ENCODE measurements at regions of chr3 and their contacts with region 1.

Region 1: GRCh38 chr3:4978204-4978965 is 852 bp upstream of the BHLHE40 start:
- DNase-seq: peak; percentile 97
- ATAC-seq: peak; percentile 79
- H3K4me3 ChIP-seq: peak overlapping the region; percentile 55
- H3K27ac ChIP-seq: peak overlapping the region; percentile 84
- H3K4me1 ChIP-seq: peaks cover 11% of the 10 kb centered on the region
- H3K27me3 ChIP-seq: no peaks in the 10 kb centered on the region
- CTCF ChIP-seq: 0 out of 2 replicates have a peak, but pooled peaks have one; percentile 1
- POLR2A ChIP-seq: peak; percentile 22
- RAD21 ChIP-seq: peak; percentile 23; the same call in 1 of the 2 replicates

Region 2: GRCh38 chr3:4712143-4712542 is 266.2 kb before region 1 on chr3:
- CTCF ChIA-PET with region 1: interaction called, 15 read pairs
- POLR2A ChIA-PET with region 1: interaction called, 7 read pairs
- dilution Hi-C with region 1: no loop called
- in situ Hi-C with region 1: loop called (anchors 5 kb)
- intact Hi-C with region 1: loop called (anchors 1 kb)
- DNase-seq: peak; percentile 57
- ATAC-seq: no peak
- H3K4me3 ChIP-seq: no peak overlapping the region
- H3K27ac ChIP-seq: no peak overlapping the region
- H3K4me1 ChIP-seq: peaks cover 5% of the 10 kb centered on the region; the same call in 1 of the 2 replicates
- H3K27me3 ChIP-seq: no peaks in the 10 kb centered on the region
- CTCF ChIP-seq: no peak
- POLR2A ChIP-seq: no peak
- RAD21 ChIP-seq: no peak

Region 3: DNA sequence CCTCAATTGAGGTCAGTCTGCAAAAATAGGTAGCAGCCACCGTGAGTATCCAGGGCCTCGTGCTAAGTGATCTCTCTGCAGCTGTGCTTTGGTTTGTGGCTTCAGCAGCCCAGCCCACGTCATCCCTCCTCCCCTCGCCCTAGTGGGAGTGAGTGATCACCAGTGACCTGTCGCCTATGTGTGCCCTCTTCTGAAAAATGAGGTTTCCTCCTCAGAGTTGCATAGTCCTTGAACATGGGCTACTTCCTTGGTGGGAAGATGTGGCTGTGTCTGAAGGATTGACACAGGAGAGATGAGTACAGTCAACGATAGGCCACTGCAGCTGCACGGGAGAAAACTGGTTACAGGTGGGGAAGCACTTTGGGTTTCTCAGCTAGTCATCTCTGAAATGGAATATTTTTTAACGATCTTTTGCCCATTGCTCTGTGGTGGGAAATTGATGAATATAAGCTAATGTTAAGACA is 143.9 kb before region 1 on chr3:
- CTCF ChIA-PET with region 1: no interaction called
- POLR2A ChIA-PET with region 1: no interaction called
- dilution Hi-C with region 1: no loop called
- in situ Hi-C with region 1: loop called (anchors 10 kb)
- intact Hi-C with region 1: no loop called
- DNase-seq: peak; percentile 17
- ATAC-seq: no peak
- H3K4me3 ChIP-seq: no peak overlapping the region
- H3K27ac ChIP-seq: no peak overlapping the region
- H3K4me1 ChIP-seq: peaks cover 6% of the 10 kb centered on the region
- H3K27me3 ChIP-seq: no peaks in the 10 kb centered on the region
- CTCF ChIP-seq: no peak
- POLR2A ChIP-seq: no peak
- RAD21 ChIP-seq: no peak

Region 4: GRCh38 chr3:4898454-4899313 is 79.7 kb before region 1 on chr3:
- CTCF ChIA-PET with region 1: interaction called, 14 read pairs
- POLR2A ChIA-PET with region 1: no interaction called
- dilution Hi-C with region 1: no loop called
- in situ Hi-C with region 1: no loop called
- intact Hi-C with region 1: no loop called
- DNase-seq: peak; percentile 9
- ATAC-seq: no peak; the same call in 1 of the 2 replicates
- H3K4me3 ChIP-seq: no peak overlapping the region
- H3K27ac ChIP-seq: no peak overlapping the region
- H3K4me1 ChIP-seq: 0 out of 2 replicates have a peak, but pooled peaks cover 3% of the 10 kb centered on the region
- H3K27me3 ChIP-seq: peaks cover 4% of the 10 kb centered on the region; the same call in 1 of the 2 replicates
- CTCF ChIP-seq: no peak
- POLR2A ChIP-seq: no peak
- RAD21 ChIP-seq: no peak

Region 5: DNA sequence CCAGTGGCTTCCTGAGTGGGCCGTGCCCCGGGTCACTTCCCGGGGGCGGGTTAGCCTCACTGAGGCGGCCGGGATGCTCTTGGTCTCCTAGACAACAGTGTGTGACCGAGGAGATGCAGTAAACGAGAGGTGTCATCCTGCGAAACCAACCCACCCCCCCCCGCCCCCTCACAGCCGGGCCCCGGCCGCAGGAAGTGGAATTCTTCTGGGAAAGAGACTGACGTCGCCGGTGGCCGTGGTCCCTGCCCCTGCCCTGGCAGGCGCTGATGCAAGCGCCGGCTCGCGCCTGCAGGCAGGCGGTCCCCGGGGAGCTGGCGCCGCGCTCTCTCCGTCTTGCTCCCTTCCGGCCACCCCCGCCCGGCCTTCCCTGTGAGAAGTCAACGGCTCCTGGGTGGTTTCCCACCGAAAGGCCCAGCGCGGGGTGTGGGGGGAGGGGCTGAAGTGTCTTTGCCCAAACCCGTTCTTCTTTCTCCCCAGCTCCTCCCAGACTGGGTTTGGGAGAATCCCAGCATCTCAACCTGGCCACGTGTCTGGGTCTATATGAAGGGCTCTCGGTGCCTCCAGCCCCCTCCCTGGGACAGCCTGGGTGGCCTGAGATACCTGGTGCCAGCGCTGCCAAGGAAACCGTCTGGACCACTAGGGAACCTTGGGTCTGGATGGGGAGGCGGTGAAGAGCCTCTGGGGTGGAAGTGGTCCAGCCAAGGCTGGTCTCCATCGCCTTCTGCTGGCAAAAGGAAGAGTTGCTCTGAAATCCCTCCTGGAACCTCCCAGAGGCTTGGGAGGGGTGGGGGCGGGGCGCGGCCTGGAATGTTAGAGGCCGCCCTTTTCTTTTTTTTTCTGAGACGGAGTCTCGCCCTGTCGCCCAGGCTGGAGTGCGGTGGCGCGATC is 48.2 kb after region 1 on chr3:
- CTCF ChIA-PET with region 1: interaction called, 11 read pairs
- POLR2A ChIA-PET with region 1: interaction called, 7 read pairs
- dilution Hi-C with region 1: no loop called
- in situ Hi-C with region 1: loop called (anchors 5 kb)
- intact Hi-C with region 1: loop called (anchors 1 kb)
- DNase-seq: peak; percentile 95
- ATAC-seq: peak; percentile 86
- H3K4me3 ChIP-seq: peak overlapping the region; percentile 46
- H3K27ac ChIP-seq: peak overlapping the region; percentile 90
- H3K4me1 ChIP-seq: peaks cover 7% of the 10 kb centered on the region
- H3K27me3 ChIP-seq: no peaks in the 10 kb centered on the region
- CTCF ChIP-seq: peak; percentile 93
- POLR2A ChIP-seq: peak; percentile 79
- RAD21 ChIP-seq: peak; percentile 95

Region 6: DNA sequence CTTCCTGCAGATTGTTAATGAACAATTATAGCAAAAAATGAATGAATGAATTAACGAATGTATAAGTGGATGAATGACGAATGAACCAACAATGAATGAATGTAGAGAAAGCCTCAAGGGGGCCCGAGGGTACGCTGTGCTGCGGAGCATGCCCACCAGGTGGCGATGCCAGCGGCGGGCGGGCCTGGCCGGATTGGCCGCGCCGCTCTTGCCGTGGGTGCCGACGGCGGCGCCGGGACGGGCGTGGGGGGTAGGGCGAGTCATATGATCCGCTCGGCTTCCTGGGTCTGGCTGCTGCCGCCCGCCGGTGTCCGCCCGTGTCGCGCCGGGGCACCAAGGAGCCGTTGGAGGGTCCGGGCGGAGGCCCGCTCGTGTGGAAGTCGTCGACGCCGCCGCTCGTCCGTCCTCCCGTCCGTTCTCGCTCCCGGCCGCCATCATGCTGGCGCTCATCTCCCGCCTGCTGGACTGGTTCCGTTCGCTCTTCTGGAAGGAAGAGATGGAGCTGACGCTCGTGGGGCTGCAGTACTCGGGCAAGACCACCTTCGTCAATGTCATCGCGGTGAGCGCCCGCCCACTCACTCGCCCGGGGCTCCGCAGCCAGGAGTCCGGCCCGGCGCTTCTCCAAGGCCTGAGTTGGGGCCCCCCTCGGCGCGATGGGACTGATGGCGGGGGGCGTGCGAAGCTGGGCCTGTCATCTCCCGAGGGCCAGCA is 143.8 kb after region 1 on chr3 and contains the start of gene ARL8B:
- CTCF ChIA-PET with region 1: no interaction called
- POLR2A ChIA-PET with region 1: no interaction called
- dilution Hi-C with region 1: no loop called
- in situ Hi-C with region 1: loop called (anchors 10 kb)
- intact Hi-C with region 1: loop called (anchors 1 kb)
- DNase-seq: peak; percentile 83
- ATAC-seq: peak; percentile 100
- H3K4me3 ChIP-seq: peak within 1 kb of the TSS; percentile 92
- H3K27ac ChIP-seq: peak within 1 kb of the TSS; percentile 86
- H3K4me1 ChIP-seq: peaks cover 2% of the 10 kb centered on the region; the same call in 1 of the 2 replicates
- H3K27me3 ChIP-seq: no peaks in the 10 kb centered on the region
- CTCF ChIP-seq: peak; percentile 99
- POLR2A ChIP-seq: peak; percentile 91
- RAD21 ChIP-seq: peak; percentile 62
- total RNA-seq, gene ARL8B: 47.0 and 62.5 TPM in 2 replicates